Posterior vena cava (tissue), 2 donors: ENCODE measurements at regions of chr20 and their contacts with region 1.

Region 1: GRCh38 chr20:20286061-20286460 is 81.8 kb upstream of the INSM1 start:
- DNase-seq: no peak

Region 2: GRCh38 chr20:18754030-18754652 is 1531.9 kb before region 1 on chr20:
- intact Hi-C with region 1: no loop called
- DNase-seq: no peak

Region 3: DNA sequence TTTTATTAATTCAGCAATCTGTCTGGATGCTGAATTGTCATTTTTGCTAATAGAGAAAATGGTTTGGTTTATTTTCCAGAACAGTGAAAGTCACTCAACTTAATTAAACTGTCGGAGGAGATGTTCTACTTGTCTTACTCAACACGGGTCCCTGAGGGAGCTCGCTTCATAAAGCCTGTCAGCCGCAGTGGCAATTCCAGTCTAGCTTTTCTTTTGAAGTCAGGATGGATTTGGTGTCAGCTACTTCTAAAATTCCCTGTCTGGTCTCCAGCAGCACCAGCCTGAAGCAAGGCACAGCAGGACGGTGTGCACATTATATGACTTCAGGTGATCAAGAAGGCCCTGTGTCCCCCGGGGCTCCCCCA is 812.2 kb before region 1 on chr20:
- intact Hi-C with region 1: loop called in 1 of 2 experiments (anchors 10 kb)
- DNase-seq: no peak